HAP-1 (cell line): ENCODE measurements at regions of chr16 and their contacts with region 1.

Region 1: DNA sequence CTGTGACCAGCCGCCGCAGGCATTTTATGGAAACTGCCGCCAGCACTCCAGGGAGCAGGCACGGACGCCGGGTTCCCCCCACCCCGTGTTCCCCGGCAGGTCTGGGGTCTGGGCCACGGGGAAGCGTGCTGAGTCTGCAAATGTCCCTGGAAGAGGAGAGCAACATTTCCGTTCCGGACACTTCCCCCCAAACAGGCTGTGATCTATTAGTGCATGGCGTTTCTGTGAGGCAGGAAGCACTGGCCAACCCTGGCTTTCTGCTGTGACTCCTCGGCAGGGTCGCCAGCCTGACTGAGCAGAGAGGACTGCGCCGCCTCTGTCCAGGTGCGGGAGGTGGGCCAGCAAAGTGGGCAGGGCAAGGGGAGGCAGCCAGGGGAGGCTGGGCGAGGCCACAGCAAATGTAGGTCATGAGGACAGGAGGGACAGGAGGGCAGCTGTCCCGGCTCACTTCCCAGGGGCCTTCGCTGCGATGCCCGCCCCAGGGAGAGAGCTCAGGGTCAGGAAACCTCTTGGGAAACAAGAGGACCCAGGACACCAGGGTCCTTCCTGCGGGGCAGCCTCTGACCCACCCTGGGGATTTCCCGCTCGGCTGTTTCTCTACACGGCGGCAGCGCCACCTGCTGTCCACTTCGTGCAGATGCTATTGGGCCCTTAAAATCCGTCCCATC is 9.5 kb downstream of the FOXF1 start:
- DNase-seq: peak; percentile 62 to 81
- H3K4me3 ChIP-seq: no peak overlapping the region
- H3K4me1 ChIP-seq: no peaks in the 10 kb centered on the region
- H3K27me3 ChIP-seq: peaks cover 36% of the 10 kb centered on the region

Region 2: GRCh38 chr16:86072328-86073102 is 447.3 kb before region 1 on chr16:
- in situ Hi-C with region 1: loop called (anchors 5 kb)
- DNase-seq: peak; percentile 52 to 78
- H3K4me3 ChIP-seq: no peak overlapping the region
- H3K4me1 ChIP-seq: no peaks in the 10 kb centered on the region
- H3K27me3 ChIP-seq: no peaks in the 10 kb centered on the region

Region 3: DNA sequence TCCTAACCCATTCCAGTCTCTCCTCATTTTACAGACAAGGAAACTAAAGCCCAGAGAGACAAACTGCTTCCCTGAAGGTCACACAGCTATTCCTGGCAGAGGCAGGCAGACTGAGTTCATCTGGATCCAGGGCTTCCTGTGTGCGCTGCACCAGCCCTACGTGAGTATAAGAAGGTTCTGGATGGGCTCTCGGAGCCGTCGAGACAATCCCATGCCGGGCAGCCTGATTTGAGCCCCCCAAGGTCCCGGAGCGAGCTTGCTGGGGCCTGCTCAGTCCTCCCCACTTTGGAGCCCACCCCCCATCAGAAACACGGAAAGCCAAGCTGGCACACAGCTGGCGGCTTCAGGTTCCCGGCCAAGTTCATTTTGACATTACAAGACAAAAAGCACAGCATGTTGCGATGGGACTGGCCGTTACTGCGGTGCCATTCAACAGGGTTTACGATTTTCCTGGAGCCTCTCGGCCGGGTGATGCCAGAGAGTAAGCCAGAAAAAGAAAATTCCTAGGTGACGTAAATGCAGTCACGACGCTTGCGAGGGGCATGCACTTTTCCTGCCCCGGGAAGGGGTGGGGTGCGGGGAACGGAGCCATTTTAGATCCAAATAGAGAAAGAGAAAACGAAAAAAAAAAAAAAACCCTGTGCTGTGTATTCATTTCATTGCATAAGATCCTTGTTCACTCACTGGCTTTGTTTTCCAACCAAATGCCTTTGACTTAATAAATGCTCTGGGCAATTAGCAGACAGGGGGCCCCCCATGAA is 176.6 kb before region 1 on chr16:
- in situ Hi-C with region 1: loop called (anchors 5 kb)
- DNase-seq: no peak
- H3K4me3 ChIP-seq: no peak overlapping the region
- H3K4me1 ChIP-seq: no peaks in the 10 kb centered on the region
- H3K27me3 ChIP-seq: peaks cover 8% of the 10 kb centered on the region; the same call in 1 of the 2 replicates

Region 4: GRCh38 chr16:87350681-87351319 is 831.0 kb after region 1 on chr16:
- in situ Hi-C with region 1: no loop called
- DNase-seq: no peak
- H3K4me3 ChIP-seq: no peak overlapping the region
- H3K4me1 ChIP-seq: no peaks in the 10 kb centered on the region
- H3K27me3 ChIP-seq: no peaks in the 10 kb centered on the region